MCF 10A (cell line): ENCODE measurements at regions of chr10 and their contacts with region 1.

Region 1: GRCh38 chr10:45000752-45001380 is at the start of gene ZNF22:
- DNase-seq: peak; percentile 42
- H3K4me3 Mint-ChIP-seq: peak within 1 kb of the TSS; percentile 76
- H3K27ac Mint-ChIP-seq: peak within 1 kb of the TSS; percentile 67
- H3K4me1 Mint-ChIP-seq: peaks cover 26% of the 10 kb centered on the region
- H3K27me3 Mint-ChIP-seq: no peaks in the 10 kb centered on the region
- CTCF ChIP-seq: no peak
- total RNA-seq, gene ZNF22: 7.2 and 8.5 TPM in 2 replicates

Region 2: DNA sequence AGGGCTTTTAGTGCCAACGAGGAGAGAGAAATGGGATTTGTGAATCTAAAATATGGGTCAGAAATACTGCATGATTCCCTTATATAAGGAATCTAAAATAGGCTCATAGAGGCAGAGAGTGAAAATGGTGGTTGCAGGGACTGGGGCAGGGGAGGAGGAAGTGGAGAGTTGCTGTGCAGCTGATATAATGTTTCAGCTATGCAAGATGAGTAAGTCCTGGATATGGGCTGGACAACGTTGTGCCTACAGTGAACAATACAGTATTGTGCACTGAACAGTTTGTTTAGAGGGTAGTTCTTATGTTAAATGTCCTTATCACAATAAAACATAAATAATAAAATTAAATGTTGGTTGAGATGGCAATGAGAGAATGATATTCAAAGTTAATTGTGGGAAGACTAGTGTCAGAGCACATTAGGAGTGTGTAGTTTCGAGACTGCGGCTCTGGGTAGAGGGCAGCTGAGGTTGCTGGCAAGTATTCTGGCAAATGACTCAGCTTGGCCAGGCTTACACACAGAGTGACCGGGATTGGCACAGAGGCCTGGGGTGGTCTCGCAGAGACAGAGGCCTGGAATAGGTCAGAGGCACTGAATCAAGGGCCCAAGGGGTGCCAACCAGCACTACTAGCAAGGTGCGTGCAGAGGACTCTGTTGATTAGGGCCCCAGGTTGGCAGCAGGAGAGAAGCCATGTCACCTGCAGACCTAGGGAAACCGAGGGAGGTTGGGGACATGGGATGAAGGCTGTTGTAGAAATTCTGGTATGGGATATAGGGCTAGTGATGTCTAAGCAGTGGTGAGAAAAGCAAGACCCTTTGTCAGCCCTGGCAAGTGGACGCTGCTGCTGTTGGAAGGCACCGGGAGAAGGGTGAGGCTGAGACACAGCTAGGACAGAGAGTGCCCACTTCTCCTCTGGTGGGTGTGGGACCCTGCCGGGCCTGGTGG is 19.4 kb before region 1 on chr10:
- CTCF ChIA-PET with region 1: interaction called, 4 read pairs
- POLR2A ChIA-PET with region 1: interaction called, 3 read pairs
- intact Hi-C with region 1: loop called (anchors 2 kb)
- DNase-seq: peak; percentile 78
- H3K4me3 Mint-ChIP-seq: peak overlapping the region; percentile 21
- H3K27ac Mint-ChIP-seq: peak overlapping the region; percentile 81
- H3K4me1 Mint-ChIP-seq: peaks cover 36% of the 10 kb centered on the region
- H3K27me3 Mint-ChIP-seq: no peaks in the 10 kb centered on the region
- CTCF ChIP-seq: no peak